ENCODE measurements at regions of chr14 and their contacts with region 1.

Region 1: DNA sequence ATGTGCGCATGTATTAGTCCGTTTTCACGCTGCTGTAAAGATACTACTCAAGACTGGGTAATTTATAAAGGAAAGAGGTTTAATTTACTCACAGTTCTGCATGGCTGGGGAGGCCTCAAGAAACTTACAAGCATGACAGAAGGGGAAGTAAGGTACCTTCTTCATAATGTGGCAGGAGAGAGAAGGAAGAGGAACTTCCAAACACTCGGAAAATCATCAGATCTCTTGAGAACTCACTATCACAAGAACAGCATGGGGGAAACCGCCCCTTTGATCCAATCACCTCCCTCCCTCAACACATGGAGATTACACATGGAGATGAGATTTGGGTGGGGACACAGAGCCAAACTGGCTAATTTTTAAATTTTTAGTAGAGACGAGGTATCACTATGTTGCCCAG is 41.8 kb upstream of the SNX6 start:
- DNase-seq: no peak
- ATAC-seq: no peak

Region 2: GRCh38 chr14:34722717-34723545 is 51.2 kb after region 1 on chr14:
- intact Hi-C with region 1: loop called (anchors 5 kb)
- DNase-seq: no peak
- ATAC-seq: peak; percentile 83